Activated B cell treated with CpG ODN at 0.5 μM for 24 hours (primary cell): ENCODE measurements at regions of chrX and their contacts with region 1.

Region 1: GRCh38 chrX:2627272-2627867 is 63.7 kb upstream of the CD99 start:
- DNase-seq: no peak
- ATAC-seq: peak; percentile 33
- H3K4me3 Mint-ChIP-seq: no peak overlapping the region
- H3K27ac Mint-ChIP-seq: peak overlapping the region; percentile 30
- H3K4me1 Mint-ChIP-seq: peaks cover 43% of the 10 kb centered on the region
- H3K27me3 Mint-ChIP-seq: no peaks in the 10 kb centered on the region
- CTCF ChIP-seq: no peak

Region 2: GRCh38 chrX:1323315-1323714 is 1304.1 kb before region 1 on chrX:
- CTCF ChIA-PET with region 1: no interaction called
- POLR2A ChIA-PET with region 1: no interaction called
- intact Hi-C with region 1: loop called (anchors 1 kb)
- DNase-seq: peak; percentile 28
- ATAC-seq: peak; percentile 87
- H3K4me3 Mint-ChIP-seq: peak overlapping the region; percentile 3
- H3K27ac Mint-ChIP-seq: peak overlapping the region; percentile 21
- H3K4me1 Mint-ChIP-seq: peaks cover 13% of the 10 kb centered on the region
- H3K27me3 Mint-ChIP-seq: peaks cover 9% of the 10 kb centered on the region
- CTCF ChIP-seq: no peak

Region 3: GRCh38 chrX:1649621-1650020 is 977.7 kb before region 1 on chrX:
- CTCF ChIA-PET with region 1: no interaction called
- POLR2A ChIA-PET with region 1: no interaction called
- intact Hi-C with region 1: loop called (anchors 1 kb)
- DNase-seq: no peak
- ATAC-seq: no peak
- H3K4me3 Mint-ChIP-seq: no peak overlapping the region
- H3K27ac Mint-ChIP-seq: no peak overlapping the region
- H3K4me1 Mint-ChIP-seq: peaks cover 8% of the 10 kb centered on the region
- H3K27me3 Mint-ChIP-seq: peaks cover 9% of the 10 kb centered on the region
- CTCF ChIP-seq: no peak

Region 4: GRCh38 chrX:1673337-1673736 is 954.0 kb before region 1 on chrX:
- CTCF ChIA-PET with region 1: no interaction called
- POLR2A ChIA-PET with region 1: no interaction called
- intact Hi-C with region 1: loop called (anchors 1 kb)
- DNase-seq: no peak
- ATAC-seq: peak; percentile 60
- H3K4me3 Mint-ChIP-seq: no peak overlapping the region
- H3K27ac Mint-ChIP-seq: no peak overlapping the region
- H3K4me1 Mint-ChIP-seq: no peaks in the 10 kb centered on the region
- H3K27me3 Mint-ChIP-seq: no peaks in the 10 kb centered on the region
- CTCF ChIP-seq: no peak

Region 5: DNA sequence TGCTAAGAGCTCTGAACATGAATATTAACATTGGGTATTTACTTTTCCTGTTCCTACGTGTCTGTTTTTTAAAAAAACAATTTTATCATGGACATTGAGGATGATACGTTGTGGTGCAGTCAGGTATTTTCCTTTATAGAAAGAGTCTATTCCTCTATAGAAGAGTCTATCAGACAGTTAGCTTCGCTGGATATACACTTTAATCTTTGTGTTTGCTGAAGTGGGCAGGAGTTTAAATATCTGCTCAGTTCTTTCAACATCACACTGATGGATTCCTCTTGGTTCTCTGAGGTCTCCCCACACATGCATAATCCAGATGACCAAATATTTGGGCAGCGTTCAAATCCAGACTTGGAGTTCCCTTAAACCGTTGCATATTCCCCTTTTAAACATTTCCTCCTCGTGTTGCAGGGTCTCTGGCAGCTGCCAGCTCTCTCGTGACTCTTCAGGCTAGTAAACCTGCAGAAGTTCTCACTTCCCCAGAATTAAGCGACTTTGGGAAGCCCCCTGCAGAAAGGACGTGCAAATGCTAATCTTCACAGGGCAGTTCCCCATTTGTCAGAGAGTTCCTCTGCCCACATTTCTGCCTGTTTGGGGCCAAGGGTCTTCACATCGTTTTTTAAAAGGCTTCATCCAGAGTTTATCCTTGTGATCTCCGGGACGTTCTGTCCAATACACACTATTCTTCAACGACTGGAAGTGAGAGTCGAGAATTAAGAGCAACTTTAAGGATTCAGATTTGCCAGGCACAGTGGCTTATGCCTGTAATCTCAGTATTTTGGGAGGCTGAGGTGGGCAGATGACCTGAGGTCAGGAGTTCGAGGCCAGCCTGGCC is 106.1 kb before region 1 on chrX:
- CTCF ChIA-PET with region 1: no interaction called
- POLR2A ChIA-PET with region 1: no interaction called
- intact Hi-C with region 1: no loop called
- DNase-seq: peak; percentile 34
- ATAC-seq: peak; percentile 88
- H3K4me3 Mint-ChIP-seq: peak overlapping the region; percentile 71
- H3K27ac Mint-ChIP-seq: no peak overlapping the region
- H3K4me1 Mint-ChIP-seq: peaks cover 28% of the 10 kb centered on the region
- H3K27me3 Mint-ChIP-seq: no peaks in the 10 kb centered on the region
- CTCF ChIP-seq: no peak

Region 6: GRCh38 chrX:2690856-2691542 is 63.6 kb after region 1 on chrX and contains the start of gene CD99:
- CTCF ChIA-PET with region 1: no interaction called
- POLR2A ChIA-PET with region 1: no interaction called
- intact Hi-C with region 1: loop called (anchors 1 kb)
- DNase-seq: peak; percentile 92
- ATAC-seq: peak; percentile 92
- H3K4me3 Mint-ChIP-seq: peak within 1 kb of the TSS; percentile 89
- H3K27ac Mint-ChIP-seq: peak within 1 kb of the TSS; percentile 82
- H3K4me1 Mint-ChIP-seq: peaks cover 43% of the 10 kb centered on the region
- H3K27me3 Mint-ChIP-seq: no peaks in the 10 kb centered on the region
- CTCF ChIP-seq: no peak
- total RNA-seq, gene CD99: 86.4 and 102 TPM in 2 replicates

Region 7: DNA sequence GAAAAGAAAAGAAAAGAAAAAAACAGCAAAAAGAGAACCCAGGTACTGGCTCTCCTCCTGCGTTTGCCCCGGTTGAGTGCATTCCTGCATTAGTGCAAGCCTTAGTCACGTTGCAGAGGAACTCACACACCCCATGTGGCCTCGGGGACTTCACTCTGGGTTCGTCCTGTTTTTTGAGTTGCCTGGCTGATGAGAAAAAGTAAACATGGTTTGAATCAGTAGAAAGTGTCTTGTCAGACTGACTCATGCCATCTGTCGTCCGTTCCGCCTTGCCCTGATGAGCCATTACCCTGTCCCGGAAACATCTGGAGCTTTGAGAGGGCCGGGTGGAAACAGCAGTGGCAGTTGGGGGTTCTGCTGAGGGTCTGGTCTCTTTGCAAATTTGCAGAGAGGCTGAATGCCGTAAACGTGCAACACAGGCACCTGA is 80.0 kb after region 1 on chrX:
- CTCF ChIA-PET with region 1: no interaction called
- POLR2A ChIA-PET with region 1: no interaction called
- intact Hi-C with region 1: loop called (anchors 1 kb)
- DNase-seq: peak; percentile 51
- ATAC-seq: peak; percentile 90
- H3K4me3 Mint-ChIP-seq: peak overlapping the region; percentile 69
- H3K27ac Mint-ChIP-seq: peak overlapping the region; percentile 93
- H3K4me1 Mint-ChIP-seq: peaks cover 71% of the 10 kb centered on the region
- H3K27me3 Mint-ChIP-seq: no peaks in the 10 kb centered on the region
- CTCF ChIP-seq: no peak